Esophagus muscularis mucosa (tissue), 4 donors: ENCODE measurements at regions of chr19 and their contacts with region 1.

Region 1: GRCh38 chr19:37466798-37467607 is at the start of gene ZNF569:
- DNase-seq: peak; percentile 95
- H3K4me3 ChIP-seq: peak within 1 kb of the TSS; percentile 73 to 94 (median 86)
- H3K27ac ChIP-seq: peak within 1 kb of the TSS; percentile 92 to 96 (median 93)
- H3K4me1 ChIP-seq: peaks cover 16 to 34% (median 34%) of the 10 kb centered on the region in 4 donors
- H3K27me3 ChIP-seq: no peaks in the 10 kb centered on the region
- CTCF ChIP-seq: no peak
- EP300 ChIP-seq: no peak
- POLR2A ChIP-seq: no peak
- total RNA-seq, gene ZNF569: 5.6 to 11.6 (median 7.7) TPM

Region 2: GRCh38 chr19:37077934-37078725 is 388.9 kb before region 1 on chr19 and contains the start of gene ZNF420:
- intact Hi-C with region 1: loop called (anchors 5 kb)
- DNase-seq: peak; percentile 96
- H3K4me3 ChIP-seq: peak within 1 kb of the TSS; percentile 73 to 98 (median 80)
- H3K27ac ChIP-seq: peak within 1 kb of the TSS; percentile 85 to 96 (median 92)
- H3K4me1 ChIP-seq: peaks cover 12 to 27% (median 21%) of the 10 kb centered on the region in 4 donors
- H3K27me3 ChIP-seq: no peaks in the 10 kb centered on the region
- CTCF ChIP-seq: no peak
- EP300 ChIP-seq: no peak
- POLR2A ChIP-seq: no peak
- total RNA-seq, gene ZNF420: 8.5 to 19.1 (median 12.8) TPM

Region 3: GRCh38 chr19:37172368-37173366 is 294.3 kb before region 1 on chr19 and contains the start of gene ZNF585A:
- intact Hi-C with region 1: loop called (anchors 5 kb)
- DNase-seq: peak; percentile 97
- H3K4me3 ChIP-seq: peak within 1 kb of the TSS; percentile 52 to 82 (median 70)
- H3K27ac ChIP-seq: peak within 1 kb of the TSS; percentile 71 to 76 (median 74)
- H3K4me1 ChIP-seq: peaks cover 6 to 11% (median 8%) of the 10 kb centered on the region in 4 donors
- H3K27me3 ChIP-seq: no peaks in the 10 kb centered on the region
- CTCF ChIP-seq: peak; percentile 31 to 43 (median 31)
- EP300 ChIP-seq: no peak
- POLR2A ChIP-seq: no peak
- total RNA-seq, gene ZNF585A: 5.8 to 8.7 (median 6.8) TPM

Region 4: GRCh38 chr19:37370880-37371661 is 95.9 kb before region 1 on chr19 and contains the start of gene ZNF527:
- intact Hi-C with region 1: loop called (anchors 5 kb)
- DNase-seq: peak; percentile 99
- H3K4me3 ChIP-seq: peak within 1 kb of the TSS; percentile 69 to 82 (median 72)
- H3K27ac ChIP-seq: peak within 1 kb of the TSS; percentile 82 to 90 (median 88)
- H3K4me1 ChIP-seq: peaks cover 13 to 19% (median 17%) of the 10 kb centered on the region in 4 donors
- H3K27me3 ChIP-seq: no peaks in the 10 kb centered on the region
- CTCF ChIP-seq: peak in 1 of 3 experiments; percentile 7
- EP300 ChIP-seq: no peak
- POLR2A ChIP-seq: peak; percentile 59
- total RNA-seq, gene ZNF527: 4.5 to 8.8 (median 5.5) TPM

Region 5: GRCh38 chr19:37506387-37507166 is 39.6 kb after region 1 on chr19 and contains the start of gene ZNF793:
- intact Hi-C with region 1: loop called (anchors 5 kb)
- DNase-seq: peak; percentile 93
- H3K4me3 ChIP-seq: peak within 1 kb of the TSS; percentile 71 to 81 (median 78)
- H3K27ac ChIP-seq: peak within 1 kb of the TSS; percentile 90 to 97 (median 93)
- H3K4me1 ChIP-seq: peaks cover 12 to 24% (median 17%) of the 10 kb centered on the region in 4 donors
- H3K27me3 ChIP-seq: no peaks in the 10 kb centered on the region
- CTCF ChIP-seq: no peak
- EP300 ChIP-seq: no peak
- POLR2A ChIP-seq: no peak
- total RNA-seq, gene ZNF793: 3.0 to 7.1 (median 5.3) TPM

Region 6: GRCh38 chr19:37594304-37594981 is 127.4 kb after region 1 on chr19 and contains the starts of genes ZNF540 and ZNF571:
- intact Hi-C with region 1: loop called (anchors 2 kb)
- DNase-seq: peak; percentile 99
- H3K4me3 ChIP-seq: peak within 1 kb of the TSS; percentile 70 to 83 (median 73)
- H3K27ac ChIP-seq: peak within 1 kb of the TSS; percentile 90 to 93 (median 92)
- H3K4me1 ChIP-seq: peaks cover 12 to 26% (median 23%) of the 10 kb centered on the region in 4 donors
- H3K27me3 ChIP-seq: no peaks in the 10 kb centered on the region
- CTCF ChIP-seq: peak in 1 of 3 experiments; percentile 10
- EP300 ChIP-seq: no peak
- POLR2A ChIP-seq: no peak
- total RNA-seq, gene ZNF540: 1.6 to 5.4 (median 2.5) TPM
- total RNA-seq, gene ZNF571: 2.8 to 4.7 (median 4.3) TPM